Vagina (tissue), 2 donors: ENCODE measurements at regions of chr20 and their contacts with region 1.

Region 1: DNA sequence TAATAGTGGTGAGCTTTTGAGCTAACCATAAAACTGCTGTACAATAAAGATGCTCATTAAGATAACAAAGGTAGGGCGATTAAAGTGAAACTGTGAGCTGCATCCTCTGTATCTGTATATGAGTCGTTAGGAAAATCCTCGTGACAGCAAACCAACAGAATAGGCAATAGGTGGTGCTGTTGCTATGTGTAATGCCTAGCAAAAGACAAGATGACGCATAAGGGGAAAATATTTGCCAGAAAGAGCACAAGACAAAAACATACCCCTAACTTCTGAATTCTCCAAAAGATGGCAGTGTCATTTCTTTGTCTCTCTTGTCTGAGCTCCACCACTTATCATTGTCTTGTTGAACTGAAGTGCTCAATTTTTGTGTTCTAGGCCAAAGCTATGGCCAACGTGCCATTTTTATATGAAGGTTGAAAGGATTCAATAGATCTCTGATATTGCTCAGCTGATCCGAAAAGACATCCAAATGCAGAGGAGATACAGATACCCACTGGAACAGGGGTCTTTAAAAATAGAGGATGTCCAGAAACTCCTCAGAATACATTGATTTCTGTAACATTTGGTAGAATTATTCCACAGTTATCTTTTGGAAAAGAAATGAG is 56.3 kb upstream of the ANKEF1 start:
- DNase-seq: no peak
- H3K4me3 ChIP-seq: no peak overlapping the region
- H3K27ac ChIP-seq: no peak overlapping the region
- H3K4me1 ChIP-seq: no peaks in the 10 kb centered on the region
- H3K27me3 ChIP-seq: no peaks in the 10 kb centered on the region
- CTCF ChIP-seq: peak; percentile 49 to 78 (median 68)
- POLR2A ChIP-seq: no peak

Region 2: DNA sequence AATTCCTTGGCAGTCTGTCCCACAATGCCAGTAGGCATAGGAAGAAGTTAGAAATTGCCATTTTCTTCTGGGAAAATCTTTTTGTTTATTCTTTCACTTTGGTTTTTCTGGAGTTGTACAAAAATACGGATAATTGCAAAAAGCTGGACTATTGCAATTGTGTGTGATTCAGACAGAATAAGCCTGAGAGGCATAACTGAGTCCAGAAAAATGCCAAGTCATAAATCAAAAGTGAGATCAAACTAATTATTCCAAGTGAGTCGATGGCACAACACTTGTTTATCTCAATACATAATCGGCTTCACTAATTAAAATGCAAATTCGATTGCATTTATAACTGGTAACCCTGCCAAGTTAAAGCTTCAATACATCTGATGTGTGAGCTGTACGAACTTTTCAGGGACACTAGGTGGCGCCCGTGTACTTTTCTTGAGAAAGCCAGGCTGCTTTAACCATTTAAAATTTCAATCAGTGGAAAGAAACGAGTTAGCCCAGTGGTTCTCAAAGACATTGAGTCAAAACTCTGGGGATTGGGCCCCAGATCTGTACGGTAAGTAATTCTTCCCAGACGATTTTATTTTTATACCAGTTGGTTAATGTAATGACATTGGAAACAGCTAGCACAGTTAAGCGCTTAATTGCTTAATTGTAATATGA is 361.5 kb before region 1 on chr20:
- intact Hi-C with region 1: no loop called
- DNase-seq: no peak
- H3K4me3 ChIP-seq: no peak overlapping the region
- H3K27ac ChIP-seq: no peak overlapping the region
- H3K4me1 ChIP-seq: no peaks in the 10 kb centered on the region
- H3K27me3 ChIP-seq: no peaks in the 10 kb centered on the region
- CTCF ChIP-seq: peak; percentile 49 to 84 (median 75)
- POLR2A ChIP-seq: no peak

Region 3: GRCh38 chr20:9829835-9830234 is 148.7 kb before region 1 on chr20:
- intact Hi-C with region 1: no loop called
- DNase-seq: no peak
- H3K4me3 ChIP-seq: no peak overlapping the region
- H3K27ac ChIP-seq: no peak overlapping the region
- H3K4me1 ChIP-seq: no peaks in the 10 kb centered on the region
- H3K27me3 ChIP-seq: no peaks in the 10 kb centered on the region
- CTCF ChIP-seq: no peak
- POLR2A ChIP-seq: no peak

Region 4: DNA sequence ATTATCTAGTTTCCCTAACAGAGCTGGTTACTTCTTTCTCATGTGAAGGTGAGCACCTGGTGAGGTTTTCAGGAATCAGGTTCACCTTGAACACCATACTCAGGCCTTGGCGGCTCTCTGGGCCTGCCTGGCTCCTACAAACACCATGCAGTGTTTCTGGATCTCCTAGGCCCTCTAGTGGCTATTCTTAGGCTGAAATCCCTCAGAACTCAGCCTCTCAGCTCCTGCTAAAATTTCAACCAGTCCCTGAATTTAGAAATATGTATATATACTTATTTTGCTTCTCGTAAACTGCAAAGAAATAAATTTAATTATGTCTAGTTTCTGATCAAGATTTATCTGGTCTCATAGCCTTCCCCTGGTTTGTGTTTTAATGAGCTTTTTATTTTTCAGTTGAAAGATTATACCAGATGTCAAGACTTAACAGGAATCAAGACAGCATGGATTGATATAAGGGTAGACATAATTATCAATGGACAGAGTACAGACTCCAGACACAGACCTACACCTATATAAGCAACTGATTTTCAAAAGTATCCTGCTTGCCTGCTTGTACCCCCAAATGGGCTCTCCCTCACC is 112.2 kb after region 1 on chr20:
- intact Hi-C with region 1: loop called (anchors 5 kb)
- DNase-seq: no peak
- H3K4me3 ChIP-seq: no peak overlapping the region
- H3K27ac ChIP-seq: no peak overlapping the region
- H3K4me1 ChIP-seq: no peaks in the 10 kb centered on the region
- H3K27me3 ChIP-seq: no peaks in the 10 kb centered on the region
- CTCF ChIP-seq: peak; percentile 12 to 56 (median 52)
- POLR2A ChIP-seq: no peak

Region 5: DNA sequence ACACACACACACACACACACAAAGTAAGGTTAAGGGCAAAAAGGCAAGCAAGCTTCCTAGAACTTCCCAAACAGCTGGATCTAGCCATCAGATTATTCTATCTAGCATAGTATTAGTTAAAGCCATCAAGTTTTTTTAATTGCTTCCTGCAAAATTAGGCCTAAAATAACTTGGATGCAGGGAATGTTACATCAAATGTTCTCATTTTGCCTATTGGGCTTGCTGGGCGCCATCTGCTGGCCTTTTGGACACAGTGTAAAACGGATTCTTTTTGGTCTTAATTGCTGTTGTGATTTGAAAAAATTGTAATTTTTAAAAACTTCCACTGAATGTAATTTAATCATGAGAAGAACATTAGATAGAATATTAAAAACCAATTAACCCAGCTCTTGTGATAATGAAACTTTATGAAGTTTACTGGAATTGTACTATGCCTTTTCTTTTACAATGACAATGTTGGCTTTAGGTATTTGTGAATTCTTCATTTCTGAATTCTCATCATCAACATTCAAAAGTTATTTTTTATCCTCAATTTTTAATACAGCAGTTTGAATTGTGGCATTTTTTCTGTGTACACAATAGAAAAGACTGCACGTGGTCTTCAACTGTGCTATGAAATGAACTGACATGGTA is 448.7 kb after region 1 on chr20:
- intact Hi-C with region 1: loop called (anchors 10 kb)
- DNase-seq: no peak
- H3K4me3 ChIP-seq: no peak overlapping the region
- H3K27ac ChIP-seq: no peak overlapping the region
- H3K4me1 ChIP-seq: peaks cover 46% of the 10 kb centered on the region
- H3K27me3 ChIP-seq: no peaks in the 10 kb centered on the region
- CTCF ChIP-seq: peak in 2 of 3 experiments; percentile 49 to 53
- POLR2A ChIP-seq: no peak